HCT116 (cell line): ENCODE measurements at regions of chr4 and their contacts with region 1.

Region 1: DNA sequence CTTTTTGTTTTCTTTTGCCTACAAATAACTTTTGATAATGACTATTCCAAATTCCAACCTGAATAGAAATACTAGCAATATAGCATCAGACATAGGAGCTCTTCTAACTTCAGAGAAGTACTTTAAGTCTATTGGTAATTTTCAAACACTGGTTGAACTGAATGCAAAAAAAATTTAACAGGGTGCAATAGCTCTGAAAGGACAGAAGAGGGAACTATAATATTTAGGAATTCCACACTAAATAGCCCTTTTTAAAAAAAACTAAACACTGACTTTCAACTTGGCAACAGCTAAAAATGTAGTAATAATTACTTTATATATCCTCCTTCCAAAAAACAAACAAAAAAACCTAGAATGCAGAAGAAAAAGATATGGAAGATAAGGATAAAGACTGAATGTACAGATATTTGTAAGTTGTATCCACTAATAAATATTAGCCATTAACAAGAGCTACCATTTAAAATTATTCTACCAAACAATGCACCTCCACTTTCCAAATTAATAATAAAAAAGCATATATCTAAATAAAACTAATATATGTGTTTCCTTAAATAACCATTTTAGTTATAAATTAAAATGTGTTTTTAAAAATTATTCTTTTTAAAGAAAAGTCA is 81.4 kb downstream of the FBXW7 start:
- DNase-seq: no peak
- ATAC-seq: no peak
- H3K4me3 ChIP-seq: no peak overlapping the region
- H3K27ac ChIP-seq: no peak overlapping the region
- H3K4me1 ChIP-seq: no peaks in the 10 kb centered on the region
- H3K27me3 ChIP-seq: no peaks in the 10 kb centered on the region
- CTCF ChIP-seq: peak; percentile 52 to 71 (median 61); a peak in 5 of 6 replicates
- POLR2A ChIP-seq: no peak
- RAD21 ChIP-seq: peak; percentile 67

Region 2: GRCh38 chr4:152640058-152640833 is 185.7 kb after region 1 on chr4:
- CTCF ChIA-PET with region 1: interaction called, 21 read pairs
- POLR2A ChIA-PET with region 1: no interaction called
- RAD21 ChIA-PET with region 1: interaction called in 1 of 2 experiments, 3 read pairs
- intact Hi-C with region 1: loop called (anchors 1 kb)
- DNase-seq: no peak
- ATAC-seq: peak; percentile 74
- H3K4me3 ChIP-seq: no peak overlapping the region
- H3K27ac ChIP-seq: no peak overlapping the region
- H3K4me1 ChIP-seq: no peaks in the 10 kb centered on the region
- H3K27me3 ChIP-seq: no peaks in the 10 kb centered on the region
- CTCF ChIP-seq: peak; percentile 31 to 73 (median 63); a peak in 3 of 6 replicates
- POLR2A ChIP-seq: no peak
- RAD21 ChIP-seq: peak; percentile 76

Region 3: GRCh38 chr4:152735396-152735859 is 280.9 kb after region 1 on chr4:
- CTCF ChIA-PET with region 1: interaction called, 3 read pairs
- POLR2A ChIA-PET with region 1: no interaction called
- RAD21 ChIA-PET with region 1: interaction called in 1 of 2 experiments, 3 read pairs
- intact Hi-C with region 1: loop called (anchors 2 kb)
- DNase-seq: peak; percentile 12
- ATAC-seq: peak; percentile 75
- H3K4me3 ChIP-seq: no peak overlapping the region
- H3K27ac ChIP-seq: no peak overlapping the region
- H3K4me1 ChIP-seq: no peaks in the 10 kb centered on the region
- H3K27me3 ChIP-seq: no peaks in the 10 kb centered on the region
- CTCF ChIP-seq: peak; percentile 44 to 70 (median 54); a peak in 5 of 6 replicates
- POLR2A ChIP-seq: no peak
- RAD21 ChIP-seq: peak; percentile 78